Aorta (tissue), 5 donors: ENCODE measurements at regions of chr17 and their contacts with region 1.

Region 1: GRCh38 chr17:8156246-8156992 is 4.2 kb upstream of the PER1 start:
- DNase-seq: peak; percentile 100
- ATAC-seq: peak; percentile 83
- H3K4me3 ChIP-seq: peak overlapping the region; percentile 78 to 81
- H3K27ac ChIP-seq: peak overlapping the region; percentile 99
- H3K4me1 ChIP-seq: no peaks in the 10 kb centered on the region
- H3K27me3 ChIP-seq: no peaks in the 10 kb centered on the region

Region 2: DNA sequence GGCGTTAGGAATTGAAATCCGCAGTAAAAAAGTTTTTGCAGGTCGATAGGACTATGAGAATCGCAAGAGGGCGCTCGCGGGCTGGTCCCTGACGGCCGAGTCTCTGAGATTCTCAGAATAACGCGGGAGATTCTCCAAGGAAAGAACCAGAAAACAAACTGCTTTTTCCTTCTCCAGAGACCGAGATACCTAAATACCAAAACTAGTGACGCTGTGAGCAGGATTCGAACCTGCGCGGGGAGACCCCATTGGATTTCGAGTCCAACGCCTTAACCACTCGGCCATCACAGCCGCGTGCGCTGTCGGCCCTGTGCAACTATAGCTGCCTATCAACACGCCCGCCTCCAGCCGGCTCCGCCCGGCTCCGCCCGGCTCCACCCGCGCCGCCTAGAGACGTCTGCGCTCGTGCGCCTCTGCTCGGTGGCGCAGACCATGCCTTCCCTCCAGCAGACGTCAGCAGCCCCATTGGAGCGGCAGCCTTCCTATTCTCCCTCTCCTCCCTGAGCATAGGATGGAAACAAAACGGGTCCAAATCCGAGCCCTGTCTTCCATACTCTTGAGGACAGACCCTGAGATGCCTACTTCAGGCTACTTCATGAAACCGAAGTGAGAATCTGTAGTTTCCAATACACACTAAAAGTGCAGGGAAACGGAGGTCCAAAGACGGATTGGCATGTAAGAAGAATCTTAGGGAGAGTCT is 17.6 kb before region 1 on chr17:
- intact Hi-C with region 1: loop called in 1 of 2 experiments (anchors 2 kb)
- DNase-seq: peak; percentile 97 to 98
- ATAC-seq: peak; percentile 95
- H3K4me3 ChIP-seq: no peak overlapping the region
- H3K27ac ChIP-seq: peak overlapping the region in 1 of 2 donors; percentile 26
- H3K4me1 ChIP-seq: peaks cover 0 to 1% of the 10 kb centered on the region in 2 donors
- H3K27me3 ChIP-seq: no peaks in the 10 kb centered on the region